Activated B cell treated with CpG ODN at 0.5 μM for 24 hours (primary cell): ENCODE measurements at regions of chr1 and their contacts with region 1.

Region 1: DNA sequence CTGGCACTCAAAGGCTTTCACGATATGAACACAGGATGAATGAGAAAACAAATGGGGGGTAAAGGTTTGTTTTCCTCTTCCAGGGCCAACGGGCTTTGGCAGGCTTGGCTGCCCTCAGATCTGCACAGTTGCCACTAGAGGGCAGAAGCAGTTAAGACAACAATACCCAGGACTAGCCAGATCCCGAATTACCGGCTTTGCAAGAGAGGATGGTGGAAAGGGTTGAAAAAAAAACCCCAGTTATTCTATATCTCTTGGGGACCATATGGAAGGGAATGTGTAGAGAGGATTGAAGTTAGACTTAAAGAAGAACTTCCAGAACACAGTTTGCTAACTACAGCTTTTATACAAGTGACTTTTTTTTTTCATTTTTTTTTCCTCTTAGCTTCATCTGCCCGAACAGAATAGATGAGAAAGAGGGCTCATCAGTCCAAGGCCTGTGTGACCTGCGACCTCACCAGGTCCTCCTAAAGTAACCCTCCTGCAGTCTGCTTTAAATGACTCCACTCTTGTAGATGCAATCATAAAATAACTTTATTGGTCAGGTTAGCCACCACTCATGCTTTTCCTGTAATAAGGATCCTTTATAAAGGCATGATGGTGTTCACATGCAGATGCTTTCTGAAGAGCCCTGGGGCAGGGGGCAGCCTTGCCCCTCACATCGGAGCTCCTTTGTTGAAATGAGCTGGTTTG is 10.7 kb downstream of the FMOD start:
- DNase-seq: no peak
- ATAC-seq: peak; percentile 73
- H3K4me3 Mint-ChIP-seq: no peak overlapping the region
- H3K27ac Mint-ChIP-seq: no peak overlapping the region
- H3K4me1 Mint-ChIP-seq: peaks cover 21% of the 10 kb centered on the region
- H3K27me3 Mint-ChIP-seq: peaks cover 17% of the 10 kb centered on the region
- CTCF ChIP-seq: peak; percentile 35

Region 2: GRCh38 chr1:203038891-203039608 is 301.2 kb before region 1 on chr1:
- CTCF ChIA-PET with region 1: interaction called, 3 read pairs
- POLR2A ChIA-PET with region 1: interaction called, 3 read pairs
- intact Hi-C with region 1: loop called (anchors 2 kb)
- DNase-seq: peak; percentile 43
- ATAC-seq: peak; percentile 96
- H3K4me3 Mint-ChIP-seq: no peak overlapping the region
- H3K27ac Mint-ChIP-seq: no peak overlapping the region
- H3K4me1 Mint-ChIP-seq: peaks cover 3% of the 10 kb centered on the region
- H3K27me3 Mint-ChIP-seq: peaks cover 12% of the 10 kb centered on the region
- CTCF ChIP-seq: peak; percentile 95

Region 3: DNA sequence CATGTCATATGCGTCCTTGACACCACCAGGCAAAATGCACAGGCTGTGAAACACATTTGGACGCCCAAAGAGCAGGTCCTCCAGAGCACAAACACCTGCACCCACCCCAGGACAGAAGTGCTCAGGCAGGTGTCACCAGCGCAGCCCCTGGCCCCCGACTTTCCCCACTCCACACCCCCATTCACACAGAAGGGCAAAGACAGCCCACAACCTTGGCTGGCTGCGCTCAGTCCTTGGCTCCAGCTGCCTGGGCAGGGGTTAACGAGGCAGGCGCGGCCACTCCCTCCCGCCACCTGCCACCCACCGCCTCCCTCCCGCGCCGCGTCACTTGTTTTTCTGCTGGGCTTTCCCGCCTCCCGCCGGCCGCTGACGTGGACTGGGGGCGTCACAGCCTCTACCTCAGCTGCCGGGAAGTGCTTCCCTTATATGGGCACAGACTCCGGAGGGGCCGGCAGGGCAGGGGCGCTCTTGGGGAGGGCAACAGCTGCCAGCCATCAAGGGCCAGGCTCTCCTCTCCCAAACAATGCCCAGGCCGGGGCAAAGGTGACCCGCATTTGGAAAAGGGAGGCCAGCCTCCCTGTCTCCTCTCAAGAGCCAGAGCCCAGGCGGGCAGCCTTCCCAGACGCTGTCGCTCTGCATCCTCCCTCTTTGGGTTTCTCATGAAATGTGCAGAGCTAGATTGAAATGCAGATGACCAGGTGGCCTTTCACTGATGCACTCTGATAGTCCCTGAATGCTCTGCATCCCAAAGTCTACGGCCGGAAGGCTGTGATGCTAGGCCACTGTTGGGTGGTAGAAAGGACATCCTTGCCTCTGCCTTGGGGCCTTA is 49.8 kb before region 1 on chr1:
- CTCF ChIA-PET with region 1: interaction called, 5 read pairs
- POLR2A ChIA-PET with region 1: interaction called, 50 read pairs
- intact Hi-C with region 1: loop called (anchors 1 kb)
- DNase-seq: peak; percentile 95
- ATAC-seq: peak; percentile 41
- H3K4me3 Mint-ChIP-seq: peak overlapping the region; percentile 85
- H3K27ac Mint-ChIP-seq: peak overlapping the region; percentile 100
- H3K4me1 Mint-ChIP-seq: peaks cover 95% of the 10 kb centered on the region
- H3K27me3 Mint-ChIP-seq: no peaks in the 10 kb centered on the region
- CTCF ChIP-seq: no peak

Region 4: DNA sequence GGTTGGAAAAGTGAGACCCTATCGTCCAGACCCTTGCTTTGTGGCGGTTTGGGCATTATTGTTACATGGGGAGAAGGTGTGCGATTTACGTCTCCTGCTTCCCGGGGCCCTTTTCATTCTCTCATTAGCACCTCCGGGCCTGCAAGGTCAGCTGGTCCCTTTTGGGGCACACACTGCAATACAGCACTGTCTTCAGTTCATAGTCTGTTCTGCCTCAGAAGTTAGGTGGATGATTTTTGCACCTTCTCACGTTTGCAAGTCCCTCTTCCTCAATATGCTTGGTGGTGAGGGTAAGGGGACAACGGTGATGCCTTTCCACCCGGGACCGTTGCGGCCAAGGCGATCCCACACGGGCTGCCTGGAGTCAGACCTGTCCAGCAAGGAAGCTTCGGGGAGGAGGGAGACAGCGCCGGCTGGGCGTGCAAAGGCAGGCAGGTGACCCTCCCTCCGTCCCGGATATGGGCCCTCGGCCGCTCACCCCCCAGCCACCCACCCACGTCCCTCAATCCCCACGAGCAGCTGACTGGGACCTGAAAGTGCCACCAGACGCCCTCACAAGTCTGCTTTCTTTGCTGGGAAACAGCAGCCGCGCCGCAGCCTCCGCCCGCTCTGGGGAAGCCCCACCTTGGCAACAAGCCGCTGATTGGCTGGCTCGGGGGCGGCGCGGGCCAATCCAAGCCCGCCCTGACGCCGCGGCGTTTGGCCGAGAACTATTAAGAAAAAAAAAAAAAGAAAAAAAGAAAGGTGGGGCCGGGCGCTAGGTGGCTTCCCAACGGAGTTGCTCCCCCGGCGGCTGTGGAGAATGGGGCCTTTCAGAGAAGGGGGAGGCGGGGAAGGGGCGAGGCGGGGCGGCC is 13.2 kb before region 1 on chr1:
- CTCF ChIA-PET with region 1: interaction called, 24 read pairs
- POLR2A ChIA-PET with region 1: interaction called, 76 read pairs
- intact Hi-C with region 1: loop called (anchors 1 kb)
- DNase-seq: peak; percentile 91
- ATAC-seq: peak; percentile 79
- H3K4me3 Mint-ChIP-seq: peak overlapping the region; percentile 84
- H3K27ac Mint-ChIP-seq: peak overlapping the region; percentile 96
- H3K4me1 Mint-ChIP-seq: peaks cover 77% of the 10 kb centered on the region
- H3K27me3 Mint-ChIP-seq: no peaks in the 10 kb centered on the region
- CTCF ChIP-seq: no peak

Region 5: DNA sequence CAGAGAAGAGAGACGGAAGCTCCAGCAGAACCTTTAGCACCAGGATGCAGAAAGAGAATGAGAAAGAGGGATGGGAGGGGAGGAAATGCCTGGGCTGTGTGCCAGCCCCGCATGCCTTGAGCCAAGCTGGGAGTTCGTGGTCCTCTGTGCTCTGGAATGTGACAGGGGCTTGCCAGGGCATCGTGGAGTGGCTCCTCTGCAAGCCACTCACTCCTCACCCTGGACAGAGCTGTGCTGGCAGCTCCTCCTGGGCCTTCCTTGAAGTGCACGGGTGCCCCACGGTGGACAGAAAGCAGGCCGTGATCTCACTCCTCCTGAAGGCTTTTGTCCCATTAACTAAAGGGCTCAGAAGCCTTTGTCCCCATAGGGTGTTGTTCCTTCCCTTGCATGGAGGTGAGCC is 100.5 kb after region 1 on chr1:
- CTCF ChIA-PET with region 1: interaction called, 103 read pairs
- POLR2A ChIA-PET with region 1: interaction called, 3 read pairs
- intact Hi-C with region 1: loop called (anchors 1 kb)
- DNase-seq: no peak
- ATAC-seq: peak; percentile 52
- H3K4me3 Mint-ChIP-seq: no peak overlapping the region
- H3K27ac Mint-ChIP-seq: no peak overlapping the region
- H3K4me1 Mint-ChIP-seq: no peaks in the 10 kb centered on the region
- H3K27me3 Mint-ChIP-seq: peaks cover 9% of the 10 kb centered on the region
- CTCF ChIP-seq: no peak

Region 6: DNA sequence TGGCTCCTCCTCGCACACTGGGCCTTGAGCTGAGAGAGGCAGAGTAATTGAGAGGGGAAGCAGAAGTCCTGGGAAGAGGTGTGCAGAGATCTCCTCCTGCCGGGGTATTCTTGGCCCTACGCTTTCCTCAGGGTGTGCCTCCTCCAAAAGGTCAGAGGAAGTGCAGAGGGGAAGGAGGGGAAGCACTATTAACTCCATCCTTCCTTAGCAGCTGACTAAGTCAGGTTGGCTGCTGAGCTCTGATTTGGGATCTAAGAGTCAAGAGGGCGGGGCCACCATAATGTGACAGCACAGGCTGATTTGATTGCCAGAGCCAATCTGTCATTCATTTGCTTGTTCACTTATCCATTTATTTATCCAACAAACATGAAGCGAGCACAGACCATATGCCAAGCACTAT is 298.7 kb after region 1 on chr1:
- CTCF ChIA-PET with region 1: no interaction called
- POLR2A ChIA-PET with region 1: no interaction called
- intact Hi-C with region 1: no loop called
- DNase-seq: no peak
- ATAC-seq: no peak
- H3K4me3 Mint-ChIP-seq: no peak overlapping the region
- H3K27ac Mint-ChIP-seq: no peak overlapping the region
- H3K4me1 Mint-ChIP-seq: peaks cover 22% of the 10 kb centered on the region
- H3K27me3 Mint-ChIP-seq: no peaks in the 10 kb centered on the region
- CTCF ChIP-seq: no peak

Region 7: DNA sequence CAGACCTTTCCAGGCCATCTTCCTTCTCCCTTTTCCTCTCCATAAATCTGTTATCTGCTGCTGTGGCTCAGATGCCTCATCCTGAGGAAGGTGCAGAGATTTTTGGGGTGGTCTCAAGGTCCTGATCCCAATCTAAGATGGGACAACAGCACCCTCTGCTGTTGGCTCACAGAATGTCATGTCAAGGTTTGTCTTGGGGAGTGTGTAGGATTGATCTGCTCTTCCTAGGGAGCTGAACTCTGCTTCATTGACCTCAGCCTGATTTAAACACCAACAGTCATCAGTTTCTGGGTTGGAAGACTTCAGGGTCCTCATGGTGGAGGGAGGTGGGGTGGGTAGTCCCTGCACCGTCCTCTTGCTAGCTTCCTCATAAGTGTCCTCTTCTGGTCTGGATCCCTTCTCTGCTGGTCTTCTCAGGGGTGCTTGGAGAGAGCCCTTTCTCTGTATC is 361.9 kb after region 1 on chr1:
- CTCF ChIA-PET with region 1: interaction called, 34 read pairs
- POLR2A ChIA-PET with region 1: no interaction called
- intact Hi-C with region 1: loop called (anchors 1 kb)
- DNase-seq: peak; percentile 48
- ATAC-seq: peak; percentile 54
- H3K4me3 Mint-ChIP-seq: no peak overlapping the region
- H3K27ac Mint-ChIP-seq: no peak overlapping the region
- H3K4me1 Mint-ChIP-seq: peaks cover 5% of the 10 kb centered on the region
- H3K27me3 Mint-ChIP-seq: no peaks in the 10 kb centered on the region
- CTCF ChIP-seq: peak; percentile 83